ENCODE measurements at regions of chr7 and their contacts with region 1.

Region 1: GRCh38 chr7:135281363-135281949 is 47.8 kb downstream of the STRA8 start:
- DNase-seq: peak; percentile 48
- ATAC-seq: peak; percentile 100
- H3K4me3 ChIP-seq: no peak overlapping the region
- H3K27ac ChIP-seq: no peak overlapping the region
- H3K4me1 ChIP-seq: no peaks in the 10 kb centered on the region
- H3K27me3 ChIP-seq: no peaks in the 10 kb centered on the region
- CTCF ChIP-seq: peak; percentile 90 to 99 (median 99)
- EP300 ChIP-seq: no peak
- POLR2A ChIP-seq: no peak
- RAD21 ChIP-seq: peak; percentile 97

Region 2: DNA sequence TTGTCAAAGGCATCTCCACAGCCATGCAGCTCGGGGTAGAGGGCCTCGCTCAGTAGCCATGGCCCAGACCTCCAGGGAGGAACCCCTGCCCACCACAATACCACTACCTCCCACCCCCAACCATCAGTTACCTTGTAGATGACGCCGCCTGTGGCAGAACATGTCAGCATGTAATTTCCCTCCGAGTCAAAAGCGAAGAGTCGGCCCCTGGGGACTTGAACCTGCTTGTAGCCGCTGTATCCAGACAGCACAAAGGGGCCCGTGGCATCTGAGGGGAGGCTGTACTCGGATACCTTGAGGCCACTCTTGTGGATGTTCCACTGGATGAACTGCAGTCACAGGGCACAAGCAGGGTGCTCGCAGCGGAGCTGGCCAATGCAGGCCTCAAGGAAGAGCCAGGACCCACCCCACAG is 94.6 kb before region 1 on chr7:
- CTCF ChIA-PET with region 1: interaction called, 11 read pairs
- POLR2A ChIA-PET with region 1: no interaction called
- RAD21 ChIA-PET with region 1: interaction called, 29 read pairs
- SMC1A ChIA-PET with region 1: interaction called, 11 read pairs
- in situ Hi-C with region 1: no loop called
- intact Hi-C with region 1: no loop called
- DNase-seq: no peak
- ATAC-seq: peak; percentile 77
- H3K4me3 ChIP-seq: peak overlapping the region; percentile 25; the same call in 1 of the 2 replicates
- H3K27ac ChIP-seq: peak overlapping the region; percentile 58
- H3K4me1 ChIP-seq: peaks cover 33% of the 10 kb centered on the region
- H3K27me3 ChIP-seq: no peaks in the 10 kb centered on the region
- CTCF ChIP-seq: peak in 1 of 3 experiments; percentile 24; a peak in 1 of 6 replicates
- EP300 ChIP-seq: peak; percentile 94 to 95; a peak in 3 of 4 replicates
- POLR2A ChIP-seq: peak; percentile 65
- RAD21 ChIP-seq: peak; percentile 27; the same call in 1 of the 2 replicates

Region 3: DNA sequence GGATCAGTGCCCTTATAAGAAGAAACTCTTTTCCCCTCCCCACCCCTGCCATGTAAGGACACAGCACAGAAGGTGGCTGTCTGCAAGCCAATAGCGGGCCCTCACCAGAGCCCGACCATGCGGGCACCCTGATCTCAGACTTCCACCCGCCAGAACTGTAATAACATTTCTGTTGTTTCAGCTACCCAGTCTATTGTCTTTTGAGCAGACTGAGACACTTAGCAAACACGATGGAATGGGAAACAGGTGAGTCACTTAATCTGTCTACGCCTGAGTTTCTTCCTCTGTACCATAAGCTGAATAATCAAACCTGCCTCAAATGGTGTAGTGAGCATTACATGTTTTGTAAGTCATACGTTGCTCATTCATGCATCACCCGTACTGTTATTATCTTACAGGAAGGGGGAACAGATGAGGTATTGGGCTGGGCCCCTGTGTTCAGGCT is 10.4 kb after region 1 on chr7:
- CTCF ChIA-PET with region 1: interaction called, 20 read pairs
- POLR2A ChIA-PET with region 1: no interaction called
- RAD21 ChIA-PET with region 1: no interaction called
- SMC1A ChIA-PET with region 1: interaction called, 4 read pairs
- in situ Hi-C with region 1: no loop called
- intact Hi-C with region 1: no loop called
- DNase-seq: no peak
- ATAC-seq: no peak
- H3K4me3 ChIP-seq: no peak overlapping the region
- H3K27ac ChIP-seq: no peak overlapping the region
- H3K4me1 ChIP-seq: no peaks in the 10 kb centered on the region
- H3K27me3 ChIP-seq: no peaks in the 10 kb centered on the region
- CTCF ChIP-seq: no peak
- EP300 ChIP-seq: no peak
- POLR2A ChIP-seq: no peak
- RAD21 ChIP-seq: no peak

Region 4: GRCh38 chr7:135355377-135356042 is 74.1 kb after region 1 on chr7:
- CTCF ChIA-PET with region 1: interaction called, 8 read pairs
- POLR2A ChIA-PET with region 1: interaction called, 3 read pairs
- RAD21 ChIA-PET with region 1: no interaction called
- SMC1A ChIA-PET with region 1: interaction called, 10 read pairs
- in situ Hi-C with region 1: no loop called
- intact Hi-C with region 1: no loop called
- DNase-seq: no peak
- ATAC-seq: peak; percentile 53
- H3K4me3 ChIP-seq: no peak overlapping the region
- H3K27ac ChIP-seq: no peak overlapping the region
- H3K4me1 ChIP-seq: no peaks in the 10 kb centered on the region
- H3K27me3 ChIP-seq: no peaks in the 10 kb centered on the region; a peak in 1 of 4 replicates
- CTCF ChIP-seq: no peak
- EP300 ChIP-seq: no peak
- POLR2A ChIP-seq: no peak
- RAD21 ChIP-seq: no peak

Region 5: GRCh38 chr7:135645296-135645904 is 363.9 kb after region 1 on chr7:
- CTCF ChIA-PET with region 1: interaction called, 123 read pairs
- POLR2A ChIA-PET with region 1: interaction called, 3 read pairs
- RAD21 ChIA-PET with region 1: interaction called, 24 read pairs
- SMC1A ChIA-PET with region 1: interaction called, 33 read pairs
- in situ Hi-C with region 1: no loop called
- intact Hi-C with region 1: loop called (anchors 1 kb)
- DNase-seq: no peak
- ATAC-seq: peak; percentile 83
- H3K4me3 ChIP-seq: no peak overlapping the region
- H3K27ac ChIP-seq: no peak overlapping the region
- H3K4me1 ChIP-seq: no peaks in the 10 kb centered on the region
- H3K27me3 ChIP-seq: no peaks in the 10 kb centered on the region
- CTCF ChIP-seq: peak; percentile 56 to 65 (median 62)
- EP300 ChIP-seq: no peak
- POLR2A ChIP-seq: no peak
- RAD21 ChIP-seq: peak; percentile 54

Measured in GM12878 (cell line).